CD4-positive, alpha-beta memory T cell (primary cell): ENCODE measurements at regions of chr4 and their contacts with region 1.

Region 1: DNA sequence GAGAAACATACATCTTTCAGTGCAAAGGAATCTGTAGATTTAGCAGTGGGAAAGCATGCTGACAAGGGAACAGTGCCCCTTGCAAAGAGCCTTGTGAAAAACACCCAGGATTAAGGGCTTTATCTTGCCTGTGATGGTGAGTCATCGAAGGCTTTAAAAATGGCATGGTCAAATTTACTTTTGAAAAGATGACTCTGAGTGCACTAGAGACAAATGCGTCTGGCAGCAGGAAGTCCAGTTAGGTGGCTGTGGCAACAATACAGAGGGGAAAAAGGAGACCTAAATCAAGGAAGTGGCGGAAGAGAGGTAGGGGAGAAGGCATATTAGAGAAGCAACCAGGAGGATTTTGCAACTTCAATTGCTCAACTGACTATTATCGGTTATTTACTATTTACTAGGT is 472.6 kb upstream of the CPEB2 start:
- DNase-seq: no peak
- H3K4me3 ChIP-seq: no peak overlapping the region
- H3K4me3 Mint-ChIP-seq: no peak overlapping the region
- H3K27ac ChIP-seq: no peak overlapping the region
- H3K27ac Mint-ChIP-seq: no peak overlapping the region
- H3K4me1 ChIP-seq: no peaks in the 10 kb centered on the region
- H3K4me1 Mint-ChIP-seq: no peaks in the 10 kb centered on the region
- H3K27me3 ChIP-seq: no peaks in the 10 kb centered on the region
- H3K27me3 Mint-ChIP-seq: no peaks in the 10 kb centered on the region

Region 2: GRCh38 chr4:14465507-14465906 is 64.1 kb before region 1 on chr4:
- CTCF ChIA-PET with region 1: no interaction called
- POLR2A ChIA-PET with region 1: no interaction called
- intact Hi-C with region 1: loop called (anchors 10 kb)
- DNase-seq: no peak
- H3K4me3 ChIP-seq: no peak overlapping the region
- H3K4me3 Mint-ChIP-seq: no peak overlapping the region
- H3K27ac ChIP-seq: no peak overlapping the region
- H3K27ac Mint-ChIP-seq: no peak overlapping the region
- H3K4me1 ChIP-seq: no peaks in the 10 kb centered on the region
- H3K4me1 Mint-ChIP-seq: no peaks in the 10 kb centered on the region
- H3K27me3 ChIP-seq: no peaks in the 10 kb centered on the region
- H3K27me3 Mint-ChIP-seq: no peaks in the 10 kb centered on the region